Motor neuron (in vitro differentiated cells): ENCODE measurements at regions of chr5 and their contacts with region 1.

Region 1: GRCh38 chr5:170434966-170435605 is 45.9 kb upstream of the KCNMB1 start:
- ATAC-seq: peak; percentile 81 to 92 (median 92)
- H3K4me3 ChIP-seq: no peak overlapping the region
- H3K27ac ChIP-seq: peak overlapping the region in 1 of 2 donors; percentile 22
- H3K4me1 ChIP-seq: peaks cover 26 to 27% of the 10 kb centered on the region in 2 donors

Region 2: DNA sequence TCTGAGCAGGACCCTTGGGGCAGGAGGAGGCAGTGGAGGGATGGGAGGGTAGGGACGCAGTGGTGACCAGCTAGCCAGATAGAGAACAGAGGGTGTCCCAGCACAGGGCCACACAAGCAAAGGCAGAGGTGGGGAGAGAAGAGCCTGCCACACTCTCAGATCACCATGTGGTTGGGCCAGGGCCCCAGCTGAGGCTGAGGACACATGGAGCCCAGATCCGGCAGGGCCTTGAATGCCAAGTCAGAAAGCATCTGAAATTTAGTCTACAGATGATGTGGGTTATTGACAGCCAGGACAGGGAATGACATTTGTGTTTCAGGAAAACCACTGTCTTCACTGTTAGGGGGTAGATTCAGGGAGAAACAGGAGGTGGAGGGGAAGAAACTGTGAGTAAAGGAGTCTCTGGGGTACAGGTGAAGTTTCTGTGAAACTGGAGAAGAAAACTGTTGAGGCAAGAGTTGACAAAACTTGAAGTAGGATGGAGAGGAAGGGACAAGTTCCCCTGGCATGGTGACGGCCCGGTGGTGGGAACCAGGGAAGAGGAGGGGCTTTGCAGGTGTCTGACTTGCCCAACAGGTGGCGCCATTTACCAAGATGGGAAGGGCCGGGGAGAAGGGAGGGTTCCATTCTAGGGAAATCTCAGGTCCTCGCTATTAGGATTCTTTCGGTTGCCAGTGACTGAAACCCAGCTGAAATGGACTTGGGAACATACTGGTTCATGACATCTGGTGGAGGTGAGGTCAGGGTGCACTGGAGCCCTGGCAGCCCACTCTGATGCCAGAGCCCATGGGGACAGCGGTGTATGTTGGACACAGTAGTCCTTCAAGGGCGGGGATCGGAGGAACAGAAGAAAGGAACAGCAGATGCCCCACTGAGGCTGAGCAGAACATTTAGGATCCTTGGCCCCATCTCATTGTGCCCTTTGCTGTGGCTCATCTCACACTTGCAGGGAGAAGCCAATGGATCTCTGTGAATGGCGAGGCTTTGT is 168.8 kb after region 1 on chr5:
- in situ Hi-C with region 1: loop called in 4 of 9 experiments (anchors 25 kb)
- ATAC-seq: peak; percentile 67 to 99 (median 81)
- H3K4me3 ChIP-seq: no peak overlapping the region
- H3K27ac ChIP-seq: no peak overlapping the region
- H3K4me1 ChIP-seq: peaks cover 34 to 49% of the 10 kb centered on the region in 2 donors

Region 3: GRCh38 chr5:170623576-170624181 is 188.6 kb after region 1 on chr5:
- in situ Hi-C with region 1: loop called (anchors 5 to 25 kb)
- ATAC-seq: peak in 5 of 8 experiments; percentile 25 to 90 (median 78)
- H3K4me3 ChIP-seq: no peak overlapping the region
- H3K27ac ChIP-seq: no peak overlapping the region
- H3K4me1 ChIP-seq: peaks cover 38 to 40% of the 10 kb centered on the region in 2 donors

Region 4: GRCh38 chr5:170638454-170639220 is 203.6 kb after region 1 on chr5:
- in situ Hi-C with region 1: loop called in 1 of 9 experiments (anchors 25 kb)
- ATAC-seq: peak; percentile 85 to 96 (median 87)
- H3K4me3 ChIP-seq: no peak overlapping the region
- H3K27ac ChIP-seq: no peak overlapping the region
- H3K4me1 ChIP-seq: peaks cover 11 to 12% of the 10 kb centered on the region in 2 donors

Region 5: GRCh38 chr5:170791325-170791954 is 356.4 kb after region 1 on chr5:
- in situ Hi-C with region 1: loop called in 3 of 9 experiments (anchors 25 kb)
- ATAC-seq: peak; percentile 66 to 95 (median 86)
- H3K4me3 ChIP-seq: no peak overlapping the region
- H3K27ac ChIP-seq: no peak overlapping the region
- H3K4me1 ChIP-seq: peaks cover 0 to 2% of the 10 kb centered on the region in 2 donors